Adrenal gland (tissue), 19 donors: ENCODE measurements at regions of chr2 and their contacts with region 1.

Region 1: GRCh38 chr2:229586746-229587705 is 127.3 kb downstream of the DNER start:
- DNase-seq: peak; percentile 79 to 94 (median 89)
- H3K4me3 ChIP-seq: peak overlapping the region in 1 of 4 donors; percentile 33
- H3K27ac ChIP-seq: peak overlapping the region in 2 of 5 donors; percentile 10 to 15
- H3K4me1 ChIP-seq: peaks cover 7 to 15% of the 10 kb centered on the region in 2 donors
- H3K27me3 ChIP-seq: no peaks in the 10 kb centered on the region
- CTCF ChIP-seq: peak; percentile 76 to 94 (median 90)
- POLR2A ChIP-seq: no peak

Region 2: DNA sequence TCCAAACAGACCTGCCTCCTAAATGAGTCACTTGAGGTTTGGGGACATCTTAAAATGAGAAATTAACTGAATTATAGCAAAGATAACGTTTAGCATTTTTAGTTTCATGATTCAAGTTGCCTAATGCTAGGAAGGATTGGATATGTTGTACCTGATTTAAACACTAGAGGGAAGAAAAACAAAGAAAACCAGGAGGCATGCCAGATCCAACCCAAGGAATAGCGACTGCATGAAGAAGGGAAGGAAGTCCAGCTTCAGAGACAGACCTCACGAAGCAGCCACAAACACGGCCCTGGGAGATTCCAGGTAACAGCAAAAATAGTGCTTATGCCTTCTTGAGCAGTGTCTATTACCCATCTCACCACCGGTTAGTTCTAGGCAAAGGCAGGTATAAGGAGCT is 905.6 kb before region 1 on chr2:
- intact Hi-C with region 1: loop called in 1 of 2 experiments (anchors 10 kb)
- DNase-seq: peak in 4 of 7 donors; percentile 36 to 60 (median 50)
- H3K4me3 ChIP-seq: no peak overlapping the region
- H3K27ac ChIP-seq: no peak overlapping the region
- H3K4me1 ChIP-seq: peaks cover 0 to 9% of the 10 kb centered on the region in 2 donors
- H3K27me3 ChIP-seq: no peaks in the 10 kb centered on the region
- CTCF ChIP-seq: peak; percentile 39 to 70 (median 68)
- POLR2A ChIP-seq: no peak

Region 3: DNA sequence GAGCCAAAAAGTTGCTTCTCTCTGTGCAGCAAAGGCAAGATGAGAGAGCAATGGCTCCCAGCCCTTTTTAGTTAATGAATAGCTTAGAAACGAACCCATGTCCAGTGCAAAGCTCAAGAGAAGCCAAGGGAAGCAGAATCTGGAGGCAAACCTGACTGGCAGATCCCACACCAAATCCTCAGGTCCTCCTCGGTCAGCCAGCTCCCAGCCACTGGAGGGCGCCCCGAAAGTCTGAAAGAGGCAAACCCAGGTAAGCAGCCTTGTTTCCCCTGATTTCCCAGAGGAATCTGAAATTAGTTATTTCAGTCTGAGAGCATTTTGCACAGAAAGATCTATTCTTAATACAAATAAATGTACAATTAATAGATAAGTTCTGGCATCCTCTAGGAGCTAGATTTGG is 244.7 kb before region 1 on chr2:
- intact Hi-C with region 1: loop called in 1 of 2 experiments (anchors 10 kb)
- DNase-seq: peak; percentile 43 to 83 (median 69)
- H3K4me3 ChIP-seq: no peak overlapping the region
- H3K27ac ChIP-seq: no peak overlapping the region
- H3K4me1 ChIP-seq: no peaks in the 10 kb centered on the region
- H3K27me3 ChIP-seq: no peaks in the 10 kb centered on the region
- CTCF ChIP-seq: peak; percentile 31 to 66 (median 56)
- POLR2A ChIP-seq: no peak

Region 4: DNA sequence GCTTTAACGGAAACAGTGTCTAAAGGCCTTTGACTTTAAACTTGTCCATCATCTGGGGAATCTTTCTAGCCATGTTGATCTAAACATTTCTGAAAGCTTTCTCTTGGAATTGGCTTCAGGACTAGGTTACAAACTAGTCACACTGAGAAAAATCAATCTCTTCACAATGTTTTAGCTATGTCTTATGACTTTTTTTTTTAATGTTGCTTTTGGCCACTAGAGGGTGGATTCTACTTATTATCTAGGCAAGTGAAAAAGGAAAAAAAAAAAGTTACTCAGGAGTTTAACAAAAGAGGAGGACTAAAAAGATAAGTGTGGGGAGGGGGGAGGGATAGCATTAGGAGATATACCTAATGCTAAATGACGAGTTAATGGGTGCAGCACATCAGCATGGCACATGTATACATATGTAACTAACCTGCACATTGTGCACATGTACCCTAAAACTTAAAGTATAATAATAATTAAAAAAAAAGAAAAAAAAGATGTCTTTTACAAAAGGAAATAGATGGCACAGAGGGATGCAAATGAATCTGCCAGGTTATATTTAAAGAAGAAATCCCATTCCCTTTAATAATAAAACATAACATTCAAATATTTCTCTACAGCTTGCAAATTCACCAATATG is 155.6 kb before region 1 on chr2:
- intact Hi-C with region 1: loop called in 1 of 2 experiments (anchors 5 kb)
- DNase-seq: no peak
- H3K4me3 ChIP-seq: no peak overlapping the region
- H3K27ac ChIP-seq: peak overlapping the region in 3 of 5 donors; percentile 15 to 42 (median 17)
- H3K4me1 ChIP-seq: peaks cover 4 to 10% of the 10 kb centered on the region in 2 donors
- H3K27me3 ChIP-seq: no peaks in the 10 kb centered on the region
- CTCF ChIP-seq: peak; percentile 43 to 74 (median 58)
- POLR2A ChIP-seq: no peak

Region 5: DNA sequence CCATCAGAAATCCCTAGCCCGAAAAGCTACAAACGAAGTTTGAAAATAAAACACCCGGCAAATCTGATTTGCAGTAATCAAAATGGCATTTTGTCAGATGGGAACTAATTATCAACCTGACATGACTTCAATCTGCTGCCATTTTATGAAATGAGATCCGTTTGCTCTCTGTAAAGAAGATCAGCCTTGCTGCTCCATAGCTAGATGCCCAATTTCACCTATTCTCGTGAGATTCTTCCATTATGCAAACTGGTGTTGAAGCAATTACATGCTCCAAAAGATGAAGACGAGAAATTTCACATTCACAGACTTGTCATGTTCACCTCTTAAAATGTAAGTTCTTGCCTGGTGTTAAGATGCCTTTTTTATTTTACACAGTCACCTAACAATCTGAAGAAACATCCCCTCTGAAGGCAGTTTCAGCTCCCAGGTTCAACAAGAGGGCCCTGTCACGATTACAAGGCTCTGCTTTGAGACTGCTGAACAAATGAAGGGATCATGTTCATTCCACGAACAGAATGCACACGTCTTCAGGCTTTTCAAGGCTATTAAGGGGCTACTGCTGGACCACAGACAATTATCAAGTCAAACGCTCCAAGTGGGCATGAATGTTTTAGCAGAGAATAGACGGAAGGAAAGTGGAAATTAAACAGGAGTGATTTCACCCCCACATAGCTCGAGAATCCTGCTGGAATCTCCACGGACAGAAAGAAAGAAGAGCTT is 143.3 kb before region 1 on chr2:
- intact Hi-C with region 1: loop called in 1 of 2 experiments (anchors 5 kb)
- DNase-seq: no peak
- H3K4me3 ChIP-seq: no peak overlapping the region
- H3K27ac ChIP-seq: peak overlapping the region in 2 of 5 donors; percentile 83 to 88
- H3K4me1 ChIP-seq: peaks cover 14 to 18% of the 10 kb centered on the region in 2 donors
- H3K27me3 ChIP-seq: no peaks in the 10 kb centered on the region
- CTCF ChIP-seq: no peak
- POLR2A ChIP-seq: no peak

Region 6: GRCh38 chr2:229714736-229715541 is 127.9 kb after region 1 on chr2:
- intact Hi-C with region 1: loop called in 1 of 2 experiments (anchors 10 kb)
- DNase-seq: peak; percentile 75 to 91 (median 84)
- H3K4me3 ChIP-seq: peak overlapping the region in 2 of 4 donors; percentile 34 to 73
- H3K27ac ChIP-seq: peak overlapping the region; percentile 60 to 93 (median 81)
- H3K4me1 ChIP-seq: peaks cover 0 to 34% of the 10 kb centered on the region in 2 donors
- H3K27me3 ChIP-seq: peaks cover 3% of the 10 kb centered on the region
- CTCF ChIP-seq: peak in 1 of 6 experiments; percentile 23
- POLR2A ChIP-seq: peak in 1 of 2 donors; percentile 73

Region 7: DNA sequence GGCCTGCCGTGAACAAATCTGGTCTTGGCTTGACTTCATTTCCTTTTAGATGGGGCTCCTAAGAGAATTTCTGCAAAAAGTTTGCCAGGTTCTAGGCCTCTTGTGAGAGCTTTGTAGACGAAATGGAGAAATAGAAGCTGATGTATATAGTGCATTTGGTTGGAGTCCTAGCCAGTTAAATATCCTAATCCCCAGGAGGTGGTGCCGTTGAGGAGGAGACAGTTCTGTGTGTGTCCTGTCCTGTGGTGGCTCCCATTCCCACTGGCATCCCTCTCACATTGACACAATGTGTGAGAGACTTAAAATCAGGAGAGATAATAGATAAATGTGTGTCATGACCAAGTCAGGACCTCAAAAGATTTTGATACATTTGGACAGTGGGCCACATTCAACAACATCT is 161.9 kb after region 1 on chr2:
- intact Hi-C with region 1: no loop called
- DNase-seq: no peak
- H3K4me3 ChIP-seq: no peak overlapping the region
- H3K27ac ChIP-seq: no peak overlapping the region
- H3K4me1 ChIP-seq: no peaks in the 10 kb centered on the region
- H3K27me3 ChIP-seq: no peaks in the 10 kb centered on the region
- CTCF ChIP-seq: no peak
- POLR2A ChIP-seq: no peak